Dendritic cell treated with granulocyte-macrophage colony-stimulating factor and Interleukin-4, amounts not matched to agents 40 ng/mL and 50 ng/mL, for 4 days (primary cell): ENCODE measurements at regions of chr22 and their contacts with region 1.

Region 1: DNA sequence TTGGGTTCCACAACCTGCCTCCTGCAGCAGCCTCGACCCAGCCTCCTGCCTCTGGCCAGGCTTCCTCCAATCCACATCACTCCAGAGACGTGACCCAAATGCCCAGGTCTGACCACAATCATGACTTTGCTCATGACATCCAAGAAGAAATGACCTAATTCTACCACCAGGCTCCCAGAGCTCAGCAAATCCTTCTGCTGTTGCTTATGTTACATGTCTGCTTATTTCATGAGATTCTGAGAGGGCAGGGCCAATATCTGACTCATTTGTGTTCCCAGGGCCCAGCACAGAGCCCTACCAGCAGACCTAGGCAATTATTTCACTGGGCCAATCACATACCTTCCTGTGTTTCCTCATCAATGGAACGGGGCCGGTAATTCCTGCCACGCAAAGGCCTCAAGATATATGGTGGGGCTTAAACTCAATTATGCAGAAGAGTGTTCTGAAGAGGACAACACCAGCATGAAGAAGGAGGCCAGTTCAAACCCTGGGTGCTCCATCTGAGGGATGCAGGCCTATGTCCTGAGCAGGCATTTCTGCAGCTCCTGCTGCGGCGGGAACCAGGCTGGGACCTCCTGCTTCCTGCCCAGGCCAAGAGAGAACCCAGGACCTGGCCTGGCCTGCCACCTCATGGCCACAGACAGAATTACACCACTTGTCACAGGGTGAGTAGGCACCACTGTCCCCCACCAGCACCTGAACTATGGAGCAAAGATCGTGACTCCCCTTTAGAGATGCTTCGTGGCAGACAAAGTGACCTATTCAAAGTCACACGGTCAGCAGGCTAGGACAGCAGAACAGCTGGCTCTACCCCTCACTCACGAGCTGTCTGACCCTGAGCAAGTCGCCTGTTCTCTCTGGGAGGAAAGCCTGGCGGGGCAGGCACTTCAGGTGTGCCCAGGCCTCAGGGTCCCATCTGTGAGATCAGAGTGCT is 5.9 kb downstream of the CENPM start:
- H3K4me3 Mint-ChIP-seq: no peak overlapping the region
- H3K27ac Mint-ChIP-seq: no peak overlapping the region
- H3K4me1 Mint-ChIP-seq: peaks cover 32% of the 10 kb centered on the region
- H3K27me3 Mint-ChIP-seq: peaks cover 5% of the 10 kb centered on the region

Region 2: GRCh38 chr22:41697126-41697775 is 243.8 kb before region 1 on chr22:
- intact Hi-C with region 1: loop called (anchors 2 kb)
- H3K4me3 Mint-ChIP-seq: peak overlapping the region; percentile 59
- H3K27ac Mint-ChIP-seq: no peak overlapping the region
- H3K4me1 Mint-ChIP-seq: peaks cover 5% of the 10 kb centered on the region
- H3K27me3 Mint-ChIP-seq: peaks cover 5% of the 10 kb centered on the region

Region 3: DNA sequence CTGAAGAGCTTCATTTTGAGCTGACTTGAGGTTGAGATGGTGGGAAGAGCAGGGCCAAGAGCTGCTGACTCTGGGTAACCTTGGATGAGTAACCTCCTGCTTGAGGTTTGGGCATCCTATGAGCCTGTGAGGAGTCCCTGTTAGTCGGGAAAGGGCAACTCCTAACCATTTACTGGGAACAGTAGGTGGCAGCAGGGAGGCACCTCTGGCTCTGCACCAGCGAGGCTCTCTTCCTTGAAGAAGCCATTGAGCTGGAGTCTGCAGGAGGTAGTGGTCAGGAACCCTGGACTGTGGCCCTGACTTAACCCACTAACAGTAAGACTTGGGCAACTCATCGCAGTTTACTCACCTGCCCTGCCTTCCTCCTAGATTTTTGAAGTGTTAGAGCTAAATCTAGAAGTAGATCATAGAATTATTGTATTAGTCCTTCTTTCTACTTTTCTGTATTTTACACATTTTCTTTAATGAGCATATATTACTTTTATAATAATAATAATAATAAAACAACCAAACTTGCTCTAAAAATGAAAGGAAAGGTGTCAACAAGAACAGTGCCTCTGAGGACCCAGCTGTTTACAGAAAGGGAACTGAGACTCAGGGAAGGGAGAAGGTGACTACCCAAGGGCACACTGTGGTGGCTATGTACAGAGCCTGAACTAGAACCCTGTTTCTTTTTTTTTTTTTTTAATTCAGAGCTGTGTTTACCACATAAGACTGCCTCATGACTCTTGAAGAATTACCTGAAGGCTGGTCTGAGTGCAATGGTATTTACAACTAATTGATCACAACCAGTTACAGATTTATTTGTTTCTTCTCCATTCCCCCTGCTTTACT is 194.3 kb before region 1 on chr22:
- intact Hi-C with region 1: loop called (anchors 1 kb)
- H3K4me3 Mint-ChIP-seq: no peak overlapping the region
- H3K27ac Mint-ChIP-seq: no peak overlapping the region
- H3K4me1 Mint-ChIP-seq: peaks cover 7% of the 10 kb centered on the region
- H3K27me3 Mint-ChIP-seq: peaks cover 27% of the 10 kb centered on the region

Region 4: DNA sequence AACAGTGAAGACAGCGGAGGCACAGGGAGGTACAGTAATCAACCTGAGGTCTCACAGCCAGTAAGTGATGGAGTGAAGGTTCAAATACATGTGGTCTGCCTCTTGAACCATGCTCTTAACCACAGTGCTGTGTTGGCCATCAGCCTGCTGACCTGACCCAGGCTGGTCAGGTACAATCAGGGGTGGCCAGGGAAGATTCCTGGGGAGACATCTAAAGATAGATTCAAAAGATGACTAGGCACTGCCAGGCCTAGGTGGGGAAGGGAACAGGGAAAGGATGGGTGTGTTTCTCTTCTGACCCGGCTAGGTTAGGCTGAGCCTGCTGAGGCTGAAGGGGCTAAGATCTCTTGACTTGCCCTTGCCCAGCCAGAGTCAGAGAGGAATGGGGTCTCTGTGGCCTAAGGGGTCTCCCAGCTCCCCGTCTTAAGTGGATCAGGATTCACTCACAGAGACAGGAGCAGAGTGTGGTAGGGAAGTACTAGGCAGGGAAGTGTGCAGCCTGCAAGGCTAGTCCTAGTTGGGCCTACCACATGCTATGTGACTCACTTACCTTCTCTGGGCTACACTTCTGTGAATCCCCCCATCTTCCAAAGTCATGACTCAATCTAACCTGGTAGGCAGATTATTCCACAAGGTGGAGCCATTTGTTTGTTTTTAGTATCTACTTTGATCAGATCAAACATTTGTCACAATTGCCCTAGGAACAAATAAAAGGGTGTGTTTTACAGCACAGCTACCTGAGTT is 118.6 kb before region 1 on chr22:
- intact Hi-C with region 1: loop called (anchors 1 kb)
- H3K4me3 Mint-ChIP-seq: no peak overlapping the region
- H3K27ac Mint-ChIP-seq: no peak overlapping the region
- H3K4me1 Mint-ChIP-seq: peaks cover 47% of the 10 kb centered on the region
- H3K27me3 Mint-ChIP-seq: no peaks in the 10 kb centered on the region

Region 5: GRCh38 chr22:41832553-41833368 is 108.3 kb before region 1 on chr22 and contains the start of gene SREBF2:
- intact Hi-C with region 1: loop called (anchors 2 kb)
- H3K4me3 Mint-ChIP-seq: peak within 1 kb of the TSS; percentile 97
- H3K27ac Mint-ChIP-seq: peak within 1 kb of the TSS; percentile 99
- H3K4me1 Mint-ChIP-seq: peaks cover 65% of the 10 kb centered on the region
- H3K27me3 Mint-ChIP-seq: no peaks in the 10 kb centered on the region

Region 6: GRCh38 chr22:41910050-41911000 is 30.8 kb before region 1 on chr22:
- intact Hi-C with region 1: no loop called
- H3K4me3 Mint-ChIP-seq: peak overlapping the region; percentile 44
- H3K27ac Mint-ChIP-seq: no peak overlapping the region
- H3K4me1 Mint-ChIP-seq: peaks cover 44% of the 10 kb centered on the region
- H3K27me3 Mint-ChIP-seq: peaks cover 59% of the 10 kb centered on the region

Region 7: GRCh38 chr22:41920271-41920976 is 20.7 kb before region 1 on chr22:
- intact Hi-C with region 1: no loop called
- H3K4me3 Mint-ChIP-seq: peak overlapping the region; percentile 75
- H3K27ac Mint-ChIP-seq: peak overlapping the region; percentile 73
- H3K4me1 Mint-ChIP-seq: peaks cover 56% of the 10 kb centered on the region
- H3K27me3 Mint-ChIP-seq: peaks cover 66% of the 10 kb centered on the region